Mammary epithelial cell (primary cell): ENCODE measurements at regions of chr17 and their contacts with region 1.

Region 1: DNA sequence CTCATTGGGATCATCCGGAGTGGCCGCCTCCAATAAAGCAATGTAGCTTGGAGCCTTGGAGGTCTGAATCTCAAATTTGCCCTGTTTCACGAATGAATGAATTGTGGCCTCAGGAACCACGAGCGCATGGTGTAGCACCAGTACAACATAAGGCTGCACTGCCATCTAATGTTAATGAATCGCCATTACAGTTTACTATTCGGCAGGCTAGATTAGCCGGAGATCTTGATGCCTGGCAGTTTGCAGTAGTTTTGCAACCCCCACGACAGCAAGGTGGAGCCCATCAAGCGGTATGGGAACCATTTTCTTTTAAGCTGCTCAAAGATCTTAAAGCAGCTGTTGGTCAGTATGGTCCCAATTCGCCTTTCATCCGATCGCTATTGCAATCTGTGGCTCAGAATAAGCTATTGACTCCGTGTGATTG is 18.8 kb downstream of the ALOX15B start:
- DNase-seq: peak; percentile 76
- H3K4me3 ChIP-seq: no peak overlapping the region
- H3K27ac ChIP-seq: no peak overlapping the region
- H3K4me1 ChIP-seq: peaks cover 25% of the 10 kb centered on the region
- H3K27me3 ChIP-seq: no peaks in the 10 kb centered on the region
- CTCF ChIP-seq: peak; percentile 74 to 79

Region 2: DNA sequence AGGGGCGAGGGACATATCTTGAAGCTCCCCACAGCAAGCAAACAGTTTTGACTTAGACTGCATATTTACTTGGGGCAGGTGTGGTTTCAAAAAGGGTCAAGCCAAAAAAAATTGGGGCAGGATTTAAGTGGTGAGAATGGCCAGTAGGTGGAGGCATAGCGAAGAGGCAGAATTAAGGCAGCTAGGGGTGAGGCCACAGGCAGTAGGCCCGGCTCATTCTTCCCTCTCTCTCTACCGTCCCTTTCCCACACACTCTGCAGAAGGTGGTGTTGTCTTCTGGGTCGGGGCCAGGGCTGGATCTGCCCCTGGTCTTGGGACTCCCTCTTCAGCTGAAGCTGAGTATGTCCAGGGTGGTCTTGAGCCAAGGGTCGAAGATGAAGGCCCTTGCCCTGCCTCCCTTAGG is 425.2 kb before region 1 on chr17:
- CTCF ChIA-PET with region 1: no interaction called
- dilution Hi-C with region 1: no loop called
- in situ Hi-C with region 1: no loop called
- intact Hi-C with region 1: loop called (anchors 2 kb)
- DNase-seq: peak; percentile 39
- H3K4me3 ChIP-seq: no peak overlapping the region
- H3K27ac ChIP-seq: no peak overlapping the region
- H3K4me1 ChIP-seq: peaks cover 2% of the 10 kb centered on the region
- H3K27me3 ChIP-seq: no peaks in the 10 kb centered on the region
- CTCF ChIP-seq: peak; percentile 61 to 77

Region 3: GRCh38 chr17:7862692-7863437 is 194.8 kb before region 1 on chr17:
- CTCF ChIA-PET with region 1: interaction called, 3 read pairs
- dilution Hi-C with region 1: no loop called
- in situ Hi-C with region 1: no loop called
- intact Hi-C with region 1: loop called (anchors 1 kb)
- DNase-seq: no peak
- H3K4me3 ChIP-seq: no peak overlapping the region
- H3K27ac ChIP-seq: no peak overlapping the region
- H3K4me1 ChIP-seq: peaks cover 13% of the 10 kb centered on the region
- H3K27me3 ChIP-seq: no peaks in the 10 kb centered on the region
- CTCF ChIP-seq: peak; percentile 62 to 70

Region 4: GRCh38 chr17:7931709-7932482 is 125.8 kb before region 1 on chr17 and contains the starts of genes CNTROB and TRAPPC1:
- CTCF ChIA-PET with region 1: no interaction called
- dilution Hi-C with region 1: no loop called
- in situ Hi-C with region 1: no loop called
- intact Hi-C with region 1: loop called (anchors 1 kb)
- DNase-seq: peak; percentile 99
- H3K4me3 ChIP-seq: peak within 1 kb of the TSS; percentile 70 to 94 (median 87)
- H3K27ac ChIP-seq: peak within 1 kb of the TSS; percentile 85
- H3K4me1 ChIP-seq: peaks cover 16% of the 10 kb centered on the region
- H3K27me3 ChIP-seq: no peaks in the 10 kb centered on the region
- CTCF ChIP-seq: no peak
- total RNA-seq, gene CNTROB: 20.3 to 38.4 TPM
- total RNA-seq, gene TRAPPC1: 43.3 to 174 TPM

Region 5: GRCh38 chr17:8041249-8041928 is 16.3 kb before region 1 on chr17:
- CTCF ChIA-PET with region 1: no interaction called
- dilution Hi-C with region 1: no loop called
- in situ Hi-C with region 1: no loop called
- intact Hi-C with region 1: loop called (anchors 1 kb)
- DNase-seq: peak; percentile 84
- H3K4me3 ChIP-seq: no peak overlapping the region
- H3K27ac ChIP-seq: peak overlapping the region; percentile 67
- H3K4me1 ChIP-seq: peaks cover 32% of the 10 kb centered on the region
- H3K27me3 ChIP-seq: no peaks in the 10 kb centered on the region
- CTCF ChIP-seq: peak; percentile 54 to 66

Region 6: DNA sequence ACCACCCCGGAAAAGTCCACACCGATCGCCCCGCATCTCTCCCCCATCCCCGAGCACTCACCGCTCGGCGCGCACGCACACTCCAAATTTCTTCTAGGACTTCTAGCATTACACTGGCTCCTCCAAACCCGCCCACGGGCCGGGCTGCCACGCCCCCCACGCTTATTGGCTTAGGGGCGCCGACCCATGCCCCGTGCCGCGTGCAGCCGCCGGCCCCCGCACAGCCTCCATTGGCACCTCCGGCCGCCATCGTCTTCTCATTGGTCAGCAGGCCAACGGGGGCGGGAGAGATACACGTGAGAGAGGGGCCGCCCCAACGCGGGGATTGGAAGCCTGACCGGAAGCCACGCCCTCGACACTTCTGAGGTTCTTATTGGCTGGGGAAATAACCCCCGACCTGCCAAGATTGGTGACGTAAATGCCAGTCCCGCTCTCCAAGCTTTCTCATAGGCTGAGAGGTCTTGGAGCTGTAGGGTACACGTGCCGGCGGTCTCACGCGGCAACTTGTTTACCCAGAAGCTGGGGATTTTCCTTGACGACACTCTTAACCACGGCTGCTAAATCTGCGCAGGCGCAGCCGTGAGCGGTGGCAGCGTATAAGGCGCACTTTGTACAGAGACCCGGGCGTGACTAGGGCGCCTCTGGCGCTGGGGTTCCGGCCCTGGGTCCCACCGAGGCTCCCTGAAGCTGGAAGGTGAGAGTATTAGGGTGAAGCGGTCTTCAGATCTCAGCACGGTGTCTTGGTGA is 98.7 kb after region 1 on chr17:
- CTCF ChIA-PET with region 1: no interaction called
- dilution Hi-C with region 1: no loop called
- in situ Hi-C with region 1: no loop called
- intact Hi-C with region 1: loop called (anchors 5 kb)
- DNase-seq: peak; percentile 100
- H3K4me3 ChIP-seq: peak overlapping the region; percentile 85 to 92 (median 88)
- H3K27ac ChIP-seq: peak overlapping the region; percentile 100
- H3K4me1 ChIP-seq: peaks cover 34% of the 10 kb centered on the region
- H3K27me3 ChIP-seq: no peaks in the 10 kb centered on the region
- CTCF ChIP-seq: peak in 1 of 2 donors; percentile 18

Region 7: GRCh38 chr17:8745586-8746500 is 688.1 kb after region 1 on chr17:
- CTCF ChIA-PET with region 1: no interaction called
- dilution Hi-C with region 1: no loop called
- in situ Hi-C with region 1: loop called in 1 of 2 experiments (anchors 25 kb)
- intact Hi-C with region 1: loop called (anchors 2 kb)
- DNase-seq: peak; percentile 22
- H3K4me3 ChIP-seq: peak overlapping the region; percentile 47 to 65 (median 56)
- H3K27ac ChIP-seq: no peak overlapping the region
- H3K4me1 ChIP-seq: peaks cover 5% of the 10 kb centered on the region
- H3K27me3 ChIP-seq: no peaks in the 10 kb centered on the region
- CTCF ChIP-seq: peak; percentile 25 to 82